Dorsolateral prefrontal cortex (tissue), 120 donors: ENCODE measurements at regions of chr7 and their contacts with region 1.

Region 1: GRCh38 chr7:99504603-99505323 is at the start of gene ZKSCAN5:
- DNase-seq: peak; percentile 95 to 99 (median 97)
- H3K4me3 ChIP-seq: peak within 1 kb of the TSS; percentile 60 to 99 (median 85)
- H3K27ac ChIP-seq: peak within 1 kb of the TSS; percentile 78 to 99 (median 97)
- H3K27me3 ChIP-seq: no peaks in the 10 kb centered on the region
- CTCF ChIP-seq: peak in 47 of 56 donors; percentile 7 to 64 (median 37)
- total RNA-seq, gene ZKSCAN5: 10.7 to 19.7 (median 14.4) TPM

Region 2: DNA sequence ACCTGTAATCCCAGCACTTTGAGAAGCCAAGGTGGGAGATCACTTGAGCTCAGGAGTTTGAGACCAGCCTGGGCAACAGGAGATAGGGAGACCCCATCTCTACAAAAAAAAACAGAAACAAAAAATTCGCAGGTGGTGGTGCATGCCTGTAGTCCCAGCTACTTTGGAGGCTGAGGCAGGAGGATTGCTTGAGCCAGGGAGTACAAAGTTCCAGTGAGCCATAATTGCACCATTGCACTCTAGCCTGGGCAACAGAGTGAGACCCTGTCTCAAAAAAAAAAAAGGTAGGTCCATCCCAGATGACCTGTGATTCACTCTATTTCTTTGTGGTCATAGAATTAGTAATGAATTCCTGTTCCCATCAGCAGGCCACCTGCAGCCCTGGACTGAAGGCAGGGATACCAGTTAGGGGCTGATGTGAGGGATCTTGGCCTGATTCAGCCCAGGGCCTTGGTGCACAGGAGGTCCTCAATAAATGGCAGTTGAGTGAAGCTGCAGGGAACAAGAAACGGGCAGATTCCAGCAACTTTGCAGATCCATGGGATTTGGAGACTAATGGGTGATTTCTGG is 232.2 kb before region 1 on chr7 and contains the start of gene MYH16:
- intact Hi-C with region 1: no loop called
- DNase-seq: no peak
- H3K4me3 ChIP-seq: no peak within 1 kb of the TSS
- H3K27ac ChIP-seq: no peak within 1 kb of the TSS
- H3K27me3 ChIP-seq: no peaks in the 10 kb centered on the region
- CTCF ChIP-seq: no peak
- total RNA-seq, gene MYH16: 0.11 to 0.83 (median 0.44) TPM in 4 of 120 experiments, not detected in the others

Region 3: GRCh38 chr7:99465421-99465768 is 39.4 kb before region 1 on chr7:
- intact Hi-C with region 1: loop called in 1 of 2 experiments (anchors 5 kb)
- DNase-seq: no peak
- H3K4me3 ChIP-seq: peak overlapping the region; percentile 68 to 100 (median 91)
- H3K27ac ChIP-seq: peak overlapping the region in 57 of 59 donors; percentile 61 to 99 (median 94)
- H3K27me3 ChIP-seq: no peaks in the 10 kb centered on the region
- CTCF ChIP-seq: no peak

Region 4: GRCh38 chr7:99472561-99473243 is 32.1 kb before region 1 on chr7 and contains the start of gene ZNF789:
- intact Hi-C with region 1: loop called (anchors 1 to 5 kb)
- DNase-seq: peak; percentile 98 to 100 (median 99)
- H3K4me3 ChIP-seq: peak within 1 kb of the TSS; percentile 65 to 100 (median 87)
- H3K27ac ChIP-seq: peak within 1 kb of the TSS; percentile 43 to 99 (median 93)
- H3K27me3 ChIP-seq: no peaks in the 10 kb centered on the region
- CTCF ChIP-seq: peak in 37 of 56 donors; percentile 4 to 52 (median 25)
- total RNA-seq, gene ZNF789: 11.6 to 35.5 (median 20.6) TPM

Region 5: GRCh38 chr7:99525713-99526440 is 21.1 kb after region 1 on chr7:
- intact Hi-C with region 1: no loop called
- DNase-seq: no peak
- H3K4me3 ChIP-seq: no peak overlapping the region
- H3K27ac ChIP-seq: no peak overlapping the region
- H3K27me3 ChIP-seq: no peaks in the 10 kb centered on the region
- CTCF ChIP-seq: no peak

Region 6: GRCh38 chr7:99551767-99552463 is 47.2 kb after region 1 on chr7 and contains the start of gene FAM200A:
- intact Hi-C with region 1: loop called in 1 of 2 experiments (anchors 2 kb)
- DNase-seq: peak; percentile 82 to 94 (median 90)
- H3K4me3 ChIP-seq: peak within 1 kb of the TSS; percentile 68 to 100 (median 94)
- H3K27ac ChIP-seq: peak within 1 kb of the TSS in 56 of 59 donors; percentile 1 to 94 (median 80)
- H3K27me3 ChIP-seq: no peaks in the 10 kb centered on the region
- CTCF ChIP-seq: peak in 8 of 56 donors; percentile 12 to 30 (median 16)
- total RNA-seq, gene FAM200A: 5.4 to 10.6 (median 8.1) TPM

Region 7: DNA sequence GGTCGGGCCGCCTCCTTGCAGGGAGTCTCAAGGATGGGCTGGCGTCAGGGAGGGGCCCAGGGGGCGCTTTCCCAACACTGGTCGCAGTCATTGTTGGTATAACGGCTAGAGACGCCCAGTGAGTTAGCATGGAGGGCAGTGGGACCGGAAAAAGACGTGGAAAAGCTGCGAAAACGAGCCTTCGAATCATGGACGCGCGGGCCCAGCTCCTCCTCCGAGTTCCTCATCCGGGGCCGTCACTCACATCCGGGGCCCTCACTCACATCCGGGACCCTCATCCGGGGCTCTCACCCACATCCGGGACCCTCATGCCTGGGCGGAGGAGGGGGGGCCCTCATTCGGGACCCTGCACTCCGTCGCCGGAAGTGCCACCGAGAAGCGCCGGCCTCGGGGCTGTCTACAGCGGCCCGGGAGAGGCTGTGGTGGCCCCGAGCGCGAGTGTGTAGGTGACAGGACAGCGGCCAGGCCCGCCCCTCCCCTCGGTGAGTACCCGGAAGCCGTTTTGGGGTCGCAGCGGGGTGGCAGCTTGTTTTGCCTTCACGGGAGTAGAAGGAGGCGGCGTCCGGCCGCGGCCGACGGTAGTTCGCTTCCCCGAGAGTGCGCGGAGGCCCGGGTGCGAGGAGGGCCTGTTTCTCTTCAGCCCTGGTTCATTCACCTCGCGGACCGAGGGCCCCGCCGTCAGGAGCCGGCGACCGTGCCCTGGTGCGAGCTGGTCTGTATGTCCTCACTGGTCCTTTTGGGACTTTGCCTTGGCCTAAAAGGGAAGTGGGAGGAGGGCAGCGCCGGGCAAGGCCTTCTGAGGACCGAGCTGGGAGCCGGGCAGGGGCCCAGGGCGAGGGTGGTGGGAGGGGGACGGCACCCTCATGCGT is 53.8 kb after region 1 on chr7 and contains the start of gene ZNF655:
- intact Hi-C with region 1: loop called in 1 of 2 experiments (anchors 2 kb)
- DNase-seq: peak; percentile 77 to 93 (median 87)
- H3K4me3 ChIP-seq: peak within 1 kb of the TSS; percentile 65 to 100 (median 96)
- H3K27ac ChIP-seq: peak within 1 kb of the TSS; percentile 86 to 99 (median 97)
- H3K27me3 ChIP-seq: no peaks in the 10 kb centered on the region
- CTCF ChIP-seq: peak in 19 of 56 donors; percentile 5 to 41 (median 16)
- total RNA-seq, gene ZNF655: 60.1 to 125 (median 87.8) TPM

Region 8: GRCh38 chr7:99616359-99617191 is 111.8 kb after region 1 on chr7 and contains the start of gene ZSCAN25:
- intact Hi-C with region 1: loop called in 1 of 2 experiments (anchors 2 kb)
- DNase-seq: peak; percentile 75 to 92 (median 89)
- H3K4me3 ChIP-seq: peak within 1 kb of the TSS; percentile 70 to 100 (median 98)
- H3K27ac ChIP-seq: peak within 1 kb of the TSS in 57 of 59 donors; percentile 33 to 95 (median 80)
- H3K27me3 ChIP-seq: no peaks in the 10 kb centered on the region
- CTCF ChIP-seq: peak in 46 of 56 donors; percentile 14 to 61 (median 36)
- total RNA-seq, gene ZSCAN25: 14.8 to 38.1 (median 24.2) TPM